ENCODE measurements at regions of chr9 and their contacts with region 1.

Region 1: DNA sequence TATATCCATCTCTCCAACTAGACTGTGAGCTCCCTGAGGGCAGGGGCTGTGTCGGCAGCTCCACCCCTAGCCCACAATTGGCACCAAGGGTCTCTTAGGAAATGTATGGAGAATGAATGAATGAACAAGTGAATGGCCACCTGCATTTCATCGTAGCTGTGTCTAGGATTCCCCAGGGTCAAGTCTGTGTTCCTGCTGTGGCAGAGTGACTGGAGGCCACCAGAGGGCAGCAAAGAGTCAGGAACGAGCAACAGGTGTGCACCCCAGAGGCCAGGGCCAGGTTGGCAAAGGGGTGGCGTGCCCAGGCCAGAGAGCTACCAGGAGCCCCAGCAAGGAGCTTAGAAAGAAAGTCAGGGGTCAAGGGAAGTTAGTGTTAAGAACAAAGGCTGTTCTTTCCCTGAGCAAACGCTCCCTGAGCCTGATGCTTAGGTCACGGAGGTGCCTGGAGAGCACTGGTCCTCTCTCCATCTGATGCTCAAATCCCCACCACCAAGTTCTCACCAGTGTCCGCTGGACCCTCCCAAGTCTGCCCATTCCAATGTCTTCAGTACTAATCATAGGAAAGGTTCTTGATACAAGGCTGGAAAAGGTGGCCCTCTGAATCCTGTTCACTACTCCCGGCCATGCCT is 160.7 kb downstream of the PAX5 start:
- DNase-seq: peak; percentile 83
- ATAC-seq: peak; percentile 93
- H3K4me3 Mint-ChIP-seq: no peak overlapping the region
- H3K27ac Mint-ChIP-seq: no peak overlapping the region
- H3K4me1 Mint-ChIP-seq: peaks cover 8% of the 10 kb centered on the region
- H3K27me3 Mint-ChIP-seq: no peaks in the 10 kb centered on the region
- CTCF ChIP-seq: peak; percentile 88

Region 2: GRCh38 chr9:36738318-36738976 is 134.9 kb before region 1 on chr9:
- CTCF ChIA-PET with region 1: no interaction called
- POLR2A ChIA-PET with region 1: no interaction called
- DNase-seq: no peak
- ATAC-seq: no peak
- H3K4me3 Mint-ChIP-seq: peak overlapping the region; percentile 47
- H3K27ac Mint-ChIP-seq: no peak overlapping the region
- H3K4me1 Mint-ChIP-seq: peaks cover 18% of the 10 kb centered on the region
- H3K27me3 Mint-ChIP-seq: peaks cover 6% of the 10 kb centered on the region
- CTCF ChIP-seq: no peak

Region 3: GRCh38 chr9:36793277-36793676 is 80.1 kb before region 1 on chr9:
- CTCF ChIA-PET with region 1: interaction called, 15 read pairs
- POLR2A ChIA-PET with region 1: no interaction called
- DNase-seq: peak; percentile 63
- ATAC-seq: peak; percentile 58
- H3K4me3 Mint-ChIP-seq: no peak overlapping the region
- H3K27ac Mint-ChIP-seq: no peak overlapping the region
- H3K4me1 Mint-ChIP-seq: peaks cover 4% of the 10 kb centered on the region
- H3K27me3 Mint-ChIP-seq: no peaks in the 10 kb centered on the region; the same call in 1 of the 2 replicates
- CTCF ChIP-seq: peak; percentile 64

Region 4: DNA sequence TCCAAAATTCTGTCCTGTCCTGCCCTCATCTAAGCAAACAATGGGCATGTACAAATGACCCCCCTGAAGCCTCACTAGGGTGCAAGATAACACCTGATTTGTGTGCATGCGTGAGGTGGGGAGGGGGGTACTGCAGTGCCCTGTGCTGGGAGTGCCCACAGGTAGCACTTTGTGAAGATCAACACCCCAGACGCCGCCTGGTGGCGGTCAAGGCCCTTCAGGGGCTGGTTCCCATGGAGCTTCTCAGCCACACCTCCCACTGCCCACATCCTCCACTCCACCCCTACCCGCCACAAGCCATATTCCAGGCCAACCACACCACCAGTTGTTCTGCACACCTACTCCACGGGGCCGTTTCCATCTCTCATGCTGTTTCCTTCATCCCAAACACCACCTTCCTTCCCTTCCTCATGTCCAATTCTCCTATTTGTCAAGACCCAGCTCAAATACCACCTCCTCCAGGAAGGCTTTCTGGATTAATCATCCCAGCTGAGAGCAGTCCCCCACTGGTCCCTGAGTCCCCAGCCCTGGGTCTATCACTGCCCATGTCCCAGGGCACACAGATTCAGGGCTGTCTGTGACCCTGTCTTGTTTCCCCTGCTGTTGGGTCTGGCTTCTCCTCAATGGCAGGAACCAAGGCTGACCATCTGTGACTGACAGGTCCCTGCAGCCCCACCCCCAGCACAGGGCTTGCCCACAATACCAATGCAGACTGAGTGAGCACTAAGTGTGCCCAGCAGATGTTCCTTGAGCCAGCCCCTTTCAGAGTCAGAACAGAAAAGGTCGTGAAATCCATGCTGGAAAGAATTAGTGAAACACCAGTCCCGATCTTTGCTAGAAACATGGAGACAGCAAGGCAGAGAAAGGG is 17.7 kb before region 1 on chr9:
- CTCF ChIA-PET with region 1: interaction called, 46 read pairs
- POLR2A ChIA-PET with region 1: no interaction called
- DNase-seq: peak; percentile 77
- ATAC-seq: peak; percentile 90
- H3K4me3 Mint-ChIP-seq: no peak overlapping the region
- H3K27ac Mint-ChIP-seq: no peak overlapping the region
- H3K4me1 Mint-ChIP-seq: peaks cover 37% of the 10 kb centered on the region
- H3K27me3 Mint-ChIP-seq: no peaks in the 10 kb centered on the region; the same call in 1 of the 2 replicates
- CTCF ChIP-seq: peak; percentile 37; the same call in 1 of the 2 replicates

Region 5: GRCh38 chr9:36891341-36891959 is 18.1 kb after region 1 on chr9:
- CTCF ChIA-PET with region 1: interaction called, 32 read pairs
- POLR2A ChIA-PET with region 1: no interaction called
- DNase-seq: no peak
- ATAC-seq: 0 out of 2 replicates have a peak, but pooled peaks have one; percentile 20
- H3K4me3 Mint-ChIP-seq: no peak overlapping the region
- H3K27ac Mint-ChIP-seq: no peak overlapping the region
- H3K4me1 Mint-ChIP-seq: peaks cover 5% of the 10 kb centered on the region
- H3K27me3 Mint-ChIP-seq: no peaks in the 10 kb centered on the region
- CTCF ChIP-seq: no peak

Region 6: DNA sequence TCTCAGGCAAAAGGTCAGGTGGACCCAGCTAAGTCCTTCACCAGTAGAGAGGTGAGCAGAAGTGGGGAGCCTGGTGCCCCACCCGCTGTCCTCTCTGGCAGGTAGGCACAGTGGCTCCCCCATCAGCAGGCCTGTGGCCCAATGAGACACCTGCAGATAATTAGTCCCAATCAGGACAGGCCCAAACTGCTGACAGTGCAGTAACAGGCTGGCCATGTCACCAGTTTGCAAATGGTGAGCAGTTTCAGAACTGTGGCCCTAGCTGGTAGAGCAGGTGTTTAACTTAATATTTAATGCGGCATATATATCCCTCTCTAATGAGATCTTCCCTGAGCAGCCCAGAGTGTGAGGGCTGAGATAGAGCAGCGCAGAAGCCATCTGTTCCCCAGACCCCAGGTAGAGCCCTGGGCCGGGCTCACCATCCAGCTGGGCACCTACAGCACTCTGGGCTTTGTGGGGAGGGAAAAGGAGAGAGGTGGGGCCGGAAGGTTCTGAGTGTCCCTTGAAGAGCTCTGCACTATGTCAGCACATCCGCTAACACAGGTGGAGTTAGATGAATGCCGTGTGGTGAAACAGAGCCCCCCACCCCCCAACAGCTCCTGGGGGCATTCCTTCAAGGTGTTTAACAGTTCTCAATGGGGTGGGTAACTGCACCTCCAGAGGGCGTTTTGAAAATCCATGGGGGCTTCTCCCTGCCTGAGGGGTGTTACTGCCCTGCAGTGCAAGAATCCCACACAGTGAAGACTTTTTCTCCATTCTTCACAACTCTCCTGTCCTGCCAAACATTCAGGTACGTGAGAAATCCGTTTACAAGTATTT is 40.2 kb after region 1 on chr9:
- CTCF ChIA-PET with region 1: interaction called, 70 read pairs
- POLR2A ChIA-PET with region 1: no interaction called
- DNase-seq: peak; percentile 46
- ATAC-seq: peak; percentile 88
- H3K4me3 Mint-ChIP-seq: no peak overlapping the region
- H3K27ac Mint-ChIP-seq: no peak overlapping the region
- H3K4me1 Mint-ChIP-seq: peaks cover 8% of the 10 kb centered on the region
- H3K27me3 Mint-ChIP-seq: no peaks in the 10 kb centered on the region
- CTCF ChIP-seq: no peak

Region 7: GRCh38 chr9:36956908-36957307 is 83.5 kb after region 1 on chr9:
- CTCF ChIA-PET with region 1: interaction called, 22 read pairs
- POLR2A ChIA-PET with region 1: no interaction called
- DNase-seq: no peak
- ATAC-seq: peak; percentile 97
- H3K4me3 Mint-ChIP-seq: no peak overlapping the region
- H3K27ac Mint-ChIP-seq: no peak overlapping the region
- H3K4me1 Mint-ChIP-seq: peaks cover 22% of the 10 kb centered on the region
- H3K27me3 Mint-ChIP-seq: no peaks in the 10 kb centered on the region; the same call in 1 of the 2 replicates
- CTCF ChIP-seq: no peak

Region 8: DNA sequence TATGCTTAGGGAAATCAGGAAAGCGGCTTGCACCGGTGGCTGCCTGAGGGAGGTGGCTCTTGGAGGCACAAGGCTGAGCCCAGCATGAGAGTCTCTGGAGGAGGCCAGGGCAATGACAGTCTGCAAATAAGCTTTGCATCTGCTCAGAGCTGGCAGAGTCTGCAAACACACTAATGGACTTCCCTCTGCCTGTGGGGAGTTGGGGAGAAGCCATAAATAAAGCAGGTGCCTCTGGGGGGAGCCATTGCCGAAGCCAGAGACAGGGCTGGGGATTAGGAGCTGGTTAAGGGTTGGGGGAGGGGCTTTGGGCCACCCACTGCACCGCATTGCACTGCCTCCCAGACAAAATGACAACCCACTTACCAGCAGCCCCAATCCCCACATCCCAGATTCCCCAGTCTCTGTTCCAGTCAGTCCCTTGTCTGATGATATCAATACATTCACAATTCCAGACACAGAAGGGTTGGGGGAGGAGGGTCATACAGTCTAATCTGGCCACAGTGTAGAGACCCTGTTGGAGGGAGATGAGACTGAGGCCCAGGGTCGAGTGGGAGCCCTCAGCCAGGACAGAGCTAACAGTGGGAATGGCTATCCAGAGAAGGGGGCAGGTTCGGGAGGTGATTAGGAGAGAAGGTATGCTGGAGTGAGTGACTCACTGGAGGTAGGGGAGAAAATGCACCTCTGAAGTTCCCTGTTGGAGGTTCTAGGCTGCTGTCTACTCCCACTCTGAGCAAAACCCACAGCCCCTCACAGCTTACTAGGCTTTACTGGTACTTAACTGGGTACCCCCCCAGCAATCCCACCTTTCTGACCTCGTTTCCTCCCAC is 107.0 kb after region 1 on chr9:
- CTCF ChIA-PET with region 1: interaction called, 232 read pairs
- POLR2A ChIA-PET with region 1: no interaction called
- DNase-seq: peak; percentile 75
- ATAC-seq: peak; percentile 97
- H3K4me3 Mint-ChIP-seq: no peak overlapping the region
- H3K27ac Mint-ChIP-seq: no peak overlapping the region
- H3K4me1 Mint-ChIP-seq: peaks cover 24% of the 10 kb centered on the region
- H3K27me3 Mint-ChIP-seq: peaks cover 43% of the 10 kb centered on the region
- CTCF ChIP-seq: no peak

Measured in WTC11 (cell line).